ENCODE measurements at regions of chr1 and their contacts with region 1.

Region 1: DNA sequence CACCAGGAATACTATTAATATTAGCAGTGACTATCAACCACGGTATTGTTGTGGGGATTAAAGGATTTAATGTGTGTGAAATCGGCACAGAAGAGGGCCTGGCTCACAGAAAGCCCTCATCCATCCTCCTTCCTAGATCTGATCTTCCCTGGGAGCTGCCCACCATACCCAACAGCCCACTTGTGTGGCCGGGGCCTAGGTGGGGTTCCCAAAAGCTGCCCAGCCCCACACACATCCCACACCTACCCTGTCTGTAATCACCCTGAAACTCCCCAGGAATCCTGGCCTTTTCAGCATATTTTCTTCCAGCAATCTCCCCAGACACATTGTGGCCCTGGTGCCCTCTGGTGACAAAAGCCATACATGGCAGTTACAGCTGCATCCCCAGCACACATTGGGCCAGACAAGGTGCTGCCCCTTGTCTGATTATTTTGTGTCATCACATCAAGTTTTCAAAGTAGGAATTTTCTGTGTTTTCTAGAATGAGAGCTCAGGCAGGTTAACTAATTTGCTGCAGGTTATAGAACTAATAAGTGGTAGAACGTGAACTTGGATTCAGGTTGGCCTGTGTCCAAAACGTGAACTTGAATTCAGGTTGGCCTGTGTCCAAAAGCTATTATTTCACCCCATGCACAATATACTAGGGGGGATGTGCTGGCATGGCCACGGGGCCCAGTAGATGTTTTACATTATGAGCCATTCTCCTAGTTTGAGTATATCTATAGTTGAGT is 5.3 kb upstream of the SLC6A9 start:
- DNase-seq: peak; percentile 73 to 93 (median 78)
- ATAC-seq: peak; percentile 74
- H3K4me3 ChIP-seq: no peak overlapping the region
- H3K27ac ChIP-seq: peak overlapping the region; percentile 53
- H3K4me1 ChIP-seq: peaks cover 60 to 63% of the 10 kb centered on the region in 2 experiments
- H3K27me3 ChIP-seq: no peaks in the 10 kb centered on the region
- CTCF ChIP-seq: peak; percentile 94 to 95 (median 95)
- EP300 ChIP-seq: peak; percentile 63; the same call in 1 of the 2 replicates
- POLR2A ChIP-seq: no peak
- RAD21 ChIP-seq: peak; percentile 87 to 96

Region 2: GRCh38 chr1:43769350-43769908 is 267.1 kb before region 1 on chr1:
- CTCF ChIA-PET with region 1: no interaction called
- POLR2A ChIA-PET with region 1: no interaction called
- in situ Hi-C with region 1: no loop called
- intact Hi-C with region 1: no loop called
- DNase-seq: no peak
- ATAC-seq: no peak
- H3K4me3 ChIP-seq: no peak overlapping the region
- H3K27ac ChIP-seq: no peak overlapping the region
- H3K4me1 ChIP-seq: 0 out of 5 replicates have a peak, but pooled peaks cover 3% of the 10 kb centered on the region in 2 experiments
- H3K27me3 ChIP-seq: no peaks in the 10 kb centered on the region
- CTCF ChIP-seq: no peak
- EP300 ChIP-seq: no peak
- POLR2A ChIP-seq: no peak
- RAD21 ChIP-seq: no peak

Region 3: DNA sequence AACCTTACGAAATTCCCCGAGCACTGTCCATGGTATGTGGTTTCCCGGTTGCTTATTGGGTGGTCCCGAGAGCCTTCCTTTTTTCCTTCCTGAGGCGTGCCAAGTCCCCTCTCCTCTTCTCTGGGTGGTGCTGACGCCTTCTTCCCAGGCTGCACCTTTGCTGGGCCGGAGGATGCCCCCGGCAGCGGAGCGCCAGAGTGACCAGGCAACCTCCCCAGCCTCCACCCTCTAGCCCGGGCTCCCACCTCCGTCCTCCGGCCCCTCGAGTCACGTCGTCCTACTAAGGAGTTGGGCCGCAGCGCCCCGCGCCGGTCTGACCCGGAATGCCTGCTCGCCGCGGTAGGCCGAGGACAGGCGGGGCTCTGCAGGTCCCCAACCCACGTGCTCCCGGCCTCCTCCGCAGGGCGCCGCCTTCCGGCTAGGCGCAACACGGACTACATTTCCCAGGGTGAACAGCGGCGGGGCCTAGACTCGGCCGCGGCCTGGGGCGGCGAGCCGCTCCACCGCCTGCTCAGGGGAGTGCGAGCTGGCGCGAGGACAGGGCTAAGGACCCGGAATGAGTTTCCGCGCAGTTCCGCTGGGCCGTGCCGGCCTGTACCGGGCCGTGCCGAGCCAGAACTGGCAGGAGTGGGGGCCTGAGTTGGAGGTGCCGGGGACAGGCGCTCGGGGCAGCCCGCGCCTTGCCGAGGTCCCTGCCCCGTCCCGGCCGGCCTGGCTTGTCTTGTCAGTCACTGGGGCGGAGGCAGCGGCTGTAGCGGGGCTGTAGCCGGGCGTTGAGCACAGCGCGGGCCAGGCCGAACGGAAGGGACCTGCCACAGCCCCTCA is 90.1 kb before region 1 on chr1 and contains the start of gene IPO13:
- CTCF ChIA-PET with region 1: no interaction called
- POLR2A ChIA-PET with region 1: interaction called, 6 read pairs
- in situ Hi-C with region 1: no loop called
- intact Hi-C with region 1: loop called (anchors 5 kb)
- DNase-seq: peak; percentile 98 to 99 (median 98)
- ATAC-seq: peak; percentile 96
- H3K4me3 ChIP-seq: peak within 1 kb of the TSS; percentile 60
- H3K27ac ChIP-seq: peak within 1 kb of the TSS; percentile 99
- H3K4me1 ChIP-seq: peaks cover 17 to 41% of the 10 kb centered on the region in 2 experiments
- H3K27me3 ChIP-seq: no peaks in the 10 kb centered on the region
- CTCF ChIP-seq: peak; percentile 91 to 96 (median 95)
- EP300 ChIP-seq: peak; percentile 18; the same call in 1 of the 2 replicates
- POLR2A ChIP-seq: peak; percentile 90
- RAD21 ChIP-seq: peak; percentile 67 to 76
- polyA plus RNA-seq, gene IPO13: 7.0 to 9.8 TPM

Region 4: GRCh38 chr1:43991476-43992231 is 44.9 kb before region 1 on chr1 and contains the start of gene CCDC24:
- CTCF ChIA-PET with region 1: interaction called, 21 read pairs
- POLR2A ChIA-PET with region 1: interaction called, 11 read pairs
- in situ Hi-C with region 1: no loop called
- intact Hi-C with region 1: loop called (anchors 1 kb)
- DNase-seq: peak; percentile 89 to 94 (median 92)
- ATAC-seq: peak; percentile 81
- H3K4me3 ChIP-seq: peak within 1 kb of the TSS; percentile 74
- H3K27ac ChIP-seq: peak within 1 kb of the TSS; percentile 51
- H3K4me1 ChIP-seq: peaks cover 15 to 44% of the 10 kb centered on the region in 2 experiments; a peak in 4 of 5 replicates
- H3K27me3 ChIP-seq: no peaks in the 10 kb centered on the region
- CTCF ChIP-seq: peak in 1 of 3 experiments; percentile 13; a peak in 1 of 6 replicates
- EP300 ChIP-seq: no peak
- POLR2A ChIP-seq: peak; percentile 82
- RAD21 ChIP-seq: peak in 1 of 2 experiments; percentile 9; a peak in 2 of 4 replicates
- polyA plus RNA-seq, gene CCDC24: 0.31 to 0.64 TPM

Region 5: GRCh38 chr1:44012941-44013609 is 23.5 kb before region 1 on chr1:
- CTCF ChIA-PET with region 1: interaction called, 3 read pairs
- POLR2A ChIA-PET with region 1: interaction called, 29 read pairs
- in situ Hi-C with region 1: loop called (anchors 5 kb)
- intact Hi-C with region 1: no loop called
- DNase-seq: no peak
- ATAC-seq: no peak
- H3K4me3 ChIP-seq: no peak overlapping the region
- H3K27ac ChIP-seq: no peak overlapping the region
- H3K4me1 ChIP-seq: peaks cover 6 to 48% of the 10 kb centered on the region in 2 experiments; a peak in 4 of 5 replicates
- H3K27me3 ChIP-seq: no peaks in the 10 kb centered on the region
- CTCF ChIP-seq: no peak
- EP300 ChIP-seq: no peak
- POLR2A ChIP-seq: no peak
- RAD21 ChIP-seq: no peak

Measured in K562 (cell line).